ENCODE measurements at regions of chr7 and their contacts with region 1.

Region 1: DNA sequence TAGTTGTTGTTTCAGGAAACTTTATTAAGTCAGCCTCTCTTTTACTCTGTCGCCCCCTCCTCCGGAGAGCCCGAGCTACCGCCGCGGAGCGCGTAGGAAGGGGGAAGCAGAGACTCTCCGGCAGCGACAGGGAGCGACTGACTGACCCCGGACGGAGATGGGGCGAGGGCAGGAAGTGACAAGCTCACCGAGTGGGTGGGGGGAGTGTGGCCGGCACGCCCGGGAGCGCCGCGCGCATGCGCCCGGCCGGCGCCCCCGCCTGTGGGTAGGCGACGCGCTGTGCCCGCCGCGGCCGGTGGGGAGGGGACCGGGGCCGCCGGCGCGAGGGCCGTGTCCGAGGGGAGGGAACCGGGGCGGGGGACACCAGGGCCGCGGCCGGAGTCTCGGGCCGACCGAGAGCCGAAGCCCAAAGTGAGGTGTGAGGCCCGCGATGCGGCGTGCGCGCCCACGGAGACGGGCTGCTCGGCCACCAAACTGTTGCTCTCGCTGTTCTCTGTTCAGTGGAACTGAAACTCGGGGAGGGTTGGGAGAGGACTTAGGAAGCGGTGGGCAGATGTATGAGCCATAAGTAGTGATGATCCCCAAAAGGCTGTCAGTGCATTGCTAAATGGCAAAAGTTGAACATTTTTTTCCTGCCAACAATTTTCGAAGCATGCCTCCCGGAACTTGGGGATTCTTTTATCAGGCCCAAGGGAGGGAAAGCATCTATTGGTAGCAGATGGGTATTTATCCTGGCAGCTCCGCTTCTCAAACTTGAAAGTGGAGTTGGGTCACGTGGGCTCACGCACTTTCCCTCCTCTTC is at the start of gene ZNF800:
- DNase-seq: peak; percentile 86 to 90 (median 87)
- H3K4me3 ChIP-seq: peak within 1 kb of the TSS; percentile 77 to 94
- H3K4me3 Mint-ChIP-seq: peak within 1 kb of the TSS; percentile 97 to 100 (median 99)
- H3K27ac ChIP-seq: peak within 1 kb of the TSS; percentile 90
- H3K27ac Mint-ChIP-seq: peak within 1 kb of the TSS; percentile 98 to 99 (median 99)
- H3K4me1 ChIP-seq: peaks cover 46% of the 10 kb centered on the region
- H3K4me1 Mint-ChIP-seq: peaks cover 35 to 60% (median 44%) of the 10 kb centered on the region in 4 donors
- H3K27me3 ChIP-seq: no peaks in the 10 kb centered on the region
- H3K27me3 Mint-ChIP-seq: no peaks in the 10 kb centered on the region
- total RNA-seq, gene ZNF800: 61.3 to 63.3 TPM

Region 2: DNA sequence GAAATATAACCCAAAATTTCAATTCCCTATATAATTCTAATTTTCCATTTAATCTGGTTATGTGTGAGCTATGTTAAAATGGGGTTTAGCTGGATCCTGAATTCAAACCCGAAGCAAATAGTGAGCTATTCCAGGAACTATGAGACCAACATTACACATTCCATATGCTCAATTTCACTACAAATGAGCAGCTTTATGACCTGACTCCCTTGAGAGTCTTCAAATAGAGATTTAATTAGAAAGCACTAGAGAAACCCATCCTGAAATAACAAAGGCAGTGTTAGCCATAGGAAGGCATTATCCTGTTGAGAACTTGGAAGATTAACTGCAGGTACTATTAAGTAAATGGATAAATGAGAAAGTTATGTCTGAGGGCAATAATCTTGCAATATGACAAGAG is 1030.0 kb before region 1 on chr7:
- CTCF ChIA-PET with region 1: no interaction called
- POLR2A ChIA-PET with region 1: no interaction called
- intact Hi-C with region 1: no loop called
- DNase-seq: no peak
- H3K4me3 ChIP-seq: no peak overlapping the region
- H3K4me3 Mint-ChIP-seq: no peak overlapping the region
- H3K27ac ChIP-seq: no peak overlapping the region
- H3K27ac Mint-ChIP-seq: no peak overlapping the region
- H3K4me1 ChIP-seq: no peaks in the 10 kb centered on the region
- H3K4me1 Mint-ChIP-seq: no peaks in the 10 kb centered on the region
- H3K27me3 ChIP-seq: no peaks in the 10 kb centered on the region
- H3K27me3 Mint-ChIP-seq: no peaks in the 10 kb centered on the region

Region 3: DNA sequence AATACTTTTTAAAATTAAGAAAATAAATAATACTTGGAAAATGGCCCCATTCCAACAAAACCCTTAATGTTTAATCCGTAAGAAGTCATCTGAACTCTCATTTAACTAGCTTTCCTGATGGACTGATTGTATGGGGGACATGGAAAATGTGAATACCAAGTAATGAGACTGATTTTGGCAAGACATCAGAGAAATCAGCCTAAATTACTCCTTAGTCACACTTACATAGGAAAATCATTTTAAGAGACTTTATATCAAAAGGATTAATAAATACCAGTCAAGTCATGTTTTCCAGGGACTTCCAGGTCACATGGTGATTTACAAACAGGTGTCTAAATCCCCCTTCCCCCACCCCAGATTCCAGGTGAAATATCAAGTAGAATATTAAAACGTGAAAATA is 198.2 kb before region 1 on chr7:
- CTCF ChIA-PET with region 1: no interaction called
- POLR2A ChIA-PET with region 1: no interaction called
- intact Hi-C with region 1: no loop called
- DNase-seq: no peak
- H3K4me3 ChIP-seq: no peak overlapping the region
- H3K4me3 Mint-ChIP-seq: no peak overlapping the region
- H3K27ac ChIP-seq: no peak overlapping the region
- H3K27ac Mint-ChIP-seq: no peak overlapping the region
- H3K4me1 ChIP-seq: no peaks in the 10 kb centered on the region
- H3K4me1 Mint-ChIP-seq: no peaks in the 10 kb centered on the region
- H3K27me3 ChIP-seq: no peaks in the 10 kb centered on the region
- H3K27me3 Mint-ChIP-seq: peaks cover 9 to 11% of the 10 kb centered on the region in 2 donors

Region 4: DNA sequence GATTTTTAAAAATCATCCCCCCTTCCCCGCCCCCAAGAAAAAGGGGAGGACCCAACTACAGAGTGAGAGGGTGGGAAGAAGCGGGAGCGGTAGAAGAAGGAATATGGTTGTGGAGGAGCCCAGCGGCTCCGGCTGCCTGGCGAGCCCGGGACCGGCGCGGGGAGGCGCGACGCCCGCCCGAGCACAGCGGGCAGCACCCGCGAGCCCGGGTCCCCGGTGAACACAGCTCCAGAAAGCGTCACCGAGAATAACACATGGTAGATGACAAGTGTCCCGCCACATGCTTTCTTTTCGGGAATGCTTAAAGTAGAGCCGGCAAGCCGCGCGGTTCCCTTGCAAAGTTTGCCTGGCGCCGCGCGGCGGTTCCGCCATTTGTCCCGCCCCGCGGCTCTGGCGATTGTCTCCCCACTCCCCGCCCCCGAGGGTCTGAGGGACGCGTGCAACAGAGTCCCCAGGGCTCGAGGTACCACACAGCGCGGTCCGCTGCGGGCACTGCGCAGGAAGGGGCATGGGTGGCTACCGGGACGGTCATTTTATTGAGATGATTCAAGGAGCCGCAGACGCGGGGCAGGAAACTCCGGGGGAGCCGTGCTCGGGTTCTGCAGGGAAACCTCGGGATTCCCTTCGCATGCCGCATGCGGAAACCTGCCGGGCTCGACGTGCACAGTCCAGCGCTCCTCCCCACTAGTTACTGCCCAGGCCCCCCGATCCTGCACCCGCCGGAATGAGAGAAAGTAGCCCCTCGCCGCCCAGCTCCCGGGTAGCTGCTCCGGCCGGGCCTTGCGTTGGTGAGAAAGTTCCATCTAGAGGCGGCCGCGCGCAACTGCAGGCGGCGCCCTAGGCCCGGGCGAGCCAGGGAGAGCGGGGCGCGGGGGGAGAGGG is 139.2 kb before region 1 on chr7:
- CTCF ChIA-PET with region 1: interaction called, 5 read pairs
- POLR2A ChIA-PET with region 1: interaction called, 8 read pairs
- intact Hi-C with region 1: loop called (anchors 5 kb)
- DNase-seq: peak; percentile 42 to 56 (median 46)
- H3K4me3 ChIP-seq: peak overlapping the region; percentile 48 to 64
- H3K4me3 Mint-ChIP-seq: peak overlapping the region; percentile 87 to 92 (median 90)
- H3K27ac ChIP-seq: no peak overlapping the region
- H3K27ac Mint-ChIP-seq: peak overlapping the region in 2 of 7 donors; percentile 27 to 55
- H3K4me1 ChIP-seq: peaks cover 28% of the 10 kb centered on the region
- H3K4me1 Mint-ChIP-seq: peaks cover 16 to 34% (median 19%) of the 10 kb centered on the region in 4 donors
- H3K27me3 ChIP-seq: peaks cover 16% of the 10 kb centered on the region
- H3K27me3 Mint-ChIP-seq: peaks cover 39 to 47% of the 10 kb centered on the region in 2 donors

Region 5: GRCh38 chr7:127347567-127348246 is 45.1 kb before region 1 on chr7:
- CTCF ChIA-PET with region 1: interaction called, 14 read pairs
- POLR2A ChIA-PET with region 1: interaction called, 37 read pairs
- intact Hi-C with region 1: loop called (anchors 5 kb)
- DNase-seq: peak; percentile 68 to 74 (median 71)
- H3K4me3 ChIP-seq: no peak overlapping the region
- H3K4me3 Mint-ChIP-seq: peak overlapping the region; percentile 60 to 87 (median 74)
- H3K27ac ChIP-seq: no peak overlapping the region
- H3K27ac Mint-ChIP-seq: peak overlapping the region in 3 of 7 donors; percentile 19 to 58 (median 42)
- H3K4me1 ChIP-seq: peaks cover 9% of the 10 kb centered on the region
- H3K4me1 Mint-ChIP-seq: peaks cover 17 to 31% (median 20%) of the 10 kb centered on the region in 4 donors
- H3K27me3 ChIP-seq: no peaks in the 10 kb centered on the region
- H3K27me3 Mint-ChIP-seq: no peaks in the 10 kb centered on the region

Region 6: GRCh38 chr7:127404286-127405072 is 11.7 kb after region 1 on chr7:
- CTCF ChIA-PET with region 1: interaction called, 4 read pairs
- POLR2A ChIA-PET with region 1: interaction called, 24 read pairs
- intact Hi-C with region 1: no loop called
- DNase-seq: no peak
- H3K4me3 ChIP-seq: no peak overlapping the region
- H3K4me3 Mint-ChIP-seq: peak overlapping the region in 6 of 8 donors; percentile 6 to 53 (median 42)
- H3K27ac ChIP-seq: no peak overlapping the region
- H3K27ac Mint-ChIP-seq: peak overlapping the region in 5 of 7 donors; percentile 5 to 85 (median 37)
- H3K4me1 ChIP-seq: peaks cover 12% of the 10 kb centered on the region
- H3K4me1 Mint-ChIP-seq: peaks cover 15 to 34% (median 18%) of the 10 kb centered on the region in 4 donors
- H3K27me3 ChIP-seq: no peaks in the 10 kb centered on the region
- H3K27me3 Mint-ChIP-seq: peaks cover 1% of the 10 kb centered on the region in 2 donors

Region 7: GRCh38 chr7:127447326-127447945 is 54.7 kb after region 1 on chr7:
- CTCF ChIA-PET with region 1: interaction called, 38 read pairs
- POLR2A ChIA-PET with region 1: interaction called, 27 read pairs
- intact Hi-C with region 1: loop called (anchors 1 kb)
- DNase-seq: peak; percentile 62 to 68 (median 65)
- H3K4me3 ChIP-seq: no peak overlapping the region
- H3K4me3 Mint-ChIP-seq: no peak overlapping the region
- H3K27ac ChIP-seq: no peak overlapping the region
- H3K27ac Mint-ChIP-seq: peak overlapping the region in 1 of 7 donors; percentile 43
- H3K4me1 ChIP-seq: peaks cover 17% of the 10 kb centered on the region
- H3K4me1 Mint-ChIP-seq: peaks cover 9 to 18% (median 15%) of the 10 kb centered on the region in 4 donors
- H3K27me3 ChIP-seq: no peaks in the 10 kb centered on the region
- H3K27me3 Mint-ChIP-seq: peaks cover 7 to 10% of the 10 kb centered on the region in 2 donors

Region 8: GRCh38 chr7:127585044-127585953 is 192.5 kb after region 1 on chr7 and contains the start of gene GCC1:
- CTCF ChIA-PET with region 1: interaction called, 4 read pairs
- POLR2A ChIA-PET with region 1: interaction called, 40 read pairs
- intact Hi-C with region 1: no loop called
- DNase-seq: peak; percentile 90 to 95 (median 91)
- H3K4me3 ChIP-seq: peak within 1 kb of the TSS; percentile 80 to 90
- H3K4me3 Mint-ChIP-seq: peak within 1 kb of the TSS; percentile 89 to 96 (median 92)
- H3K27ac ChIP-seq: peak within 1 kb of the TSS; percentile 89
- H3K27ac Mint-ChIP-seq: peak within 1 kb of the TSS; percentile 88 to 97 (median 95)
- H3K4me1 ChIP-seq: peaks cover 77% of the 10 kb centered on the region
- H3K4me1 Mint-ChIP-seq: peaks cover 41 to 87% (median 74%) of the 10 kb centered on the region in 4 donors
- H3K27me3 ChIP-seq: no peaks in the 10 kb centered on the region
- H3K27me3 Mint-ChIP-seq: no peaks in the 10 kb centered on the region
- total RNA-seq, gene GCC1: 29.1 to 30.0 TPM

Measured in CD4-positive, alpha-beta memory T cell (primary cell).